ENCODE measurements at regions of chr10 and their contacts with region 1.

Region 1: GRCh38 chr10:13586676-13587355 is at the start of gene PRPF18:
- DNase-seq: peak; percentile 87 to 96 (median 93)
- ATAC-seq: peak; percentile 100
- H3K4me3 ChIP-seq: peak within 1 kb of the TSS; percentile 96
- H3K4me3 Mint-ChIP-seq: peak within 1 kb of the TSS; percentile 95 to 100 (median 100)
- H3K27ac ChIP-seq: peak within 1 kb of the TSS; percentile 74
- H3K27ac Mint-ChIP-seq: peak within 1 kb of the TSS; percentile 91 to 100 (median 98)
- H3K4me1 ChIP-seq: peaks cover 8 to 13% of the 10 kb centered on the region in 2 donors
- H3K4me1 Mint-ChIP-seq: peaks cover 15 to 49% (median 40%) of the 10 kb centered on the region in 7 donors
- H3K27me3 ChIP-seq: no peaks in the 10 kb centered on the region
- H3K27me3 Mint-ChIP-seq: peaks cover 9 to 27% (median 16%) of the 10 kb centered on the region in 5 donors
- total RNA-seq, gene PRPF18: 20.2 to 30.0 (median 27.0) TPM

Region 2: GRCh38 chr10:12195603-12196506 is 1391.0 kb before region 1 on chr10 and contains the starts of genes CDC123 and NUDT5:
- CTCF ChIA-PET with region 1: no interaction called
- POLR2A ChIA-PET with region 1: interaction called, 4 read pairs
- intact Hi-C with region 1: loop called in 1 of 2 experiments (anchors 5 kb)
- DNase-seq: peak; percentile 77 to 89 (median 87)
- ATAC-seq: peak; percentile 96
- H3K4me3 ChIP-seq: peak within 1 kb of the TSS; percentile 84
- H3K4me3 Mint-ChIP-seq: peak within 1 kb of the TSS; percentile 94 to 99 (median 97)
- H3K27ac ChIP-seq: peak within 1 kb of the TSS; percentile 97
- H3K27ac Mint-ChIP-seq: peak within 1 kb of the TSS; percentile 96 to 99 (median 99)
- H3K4me1 ChIP-seq: peaks cover 9 to 12% of the 10 kb centered on the region in 2 donors
- H3K4me1 Mint-ChIP-seq: peaks cover 43 to 72% (median 59%) of the 10 kb centered on the region in 7 donors
- H3K27me3 ChIP-seq: no peaks in the 10 kb centered on the region
- H3K27me3 Mint-ChIP-seq: no peaks in the 10 kb centered on the region
- total RNA-seq, gene CDC123: 27.0 to 97.8 (median 34.2) TPM
- total RNA-seq, gene NUDT5: 24.5 to 89.4 (median 47.4) TPM

Region 3: DNA sequence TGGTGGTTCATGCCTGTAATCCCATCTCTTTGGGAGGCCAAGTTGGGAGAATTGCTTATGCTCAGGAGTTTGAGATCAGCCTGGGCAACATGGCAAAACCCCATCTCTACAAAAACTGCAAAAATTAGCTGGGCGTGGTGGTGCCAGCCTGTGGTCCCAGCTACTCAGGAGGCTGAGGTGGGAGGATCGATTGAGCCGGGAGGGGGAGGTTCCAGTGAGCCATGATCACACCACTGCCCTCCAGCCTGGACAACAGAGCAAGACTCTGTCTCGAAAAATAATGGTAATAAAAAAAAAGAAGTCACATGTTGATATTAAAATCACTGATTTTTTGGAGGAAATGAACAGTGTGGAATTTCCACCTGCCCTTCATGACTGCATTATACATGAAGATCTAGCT is 302.8 kb before region 1 on chr10:
- CTCF ChIA-PET with region 1: no interaction called
- POLR2A ChIA-PET with region 1: no interaction called
- intact Hi-C with region 1: no loop called
- DNase-seq: no peak
- ATAC-seq: no peak
- H3K4me3 ChIP-seq: no peak overlapping the region
- H3K4me3 Mint-ChIP-seq: no peak overlapping the region
- H3K27ac ChIP-seq: no peak overlapping the region
- H3K27ac Mint-ChIP-seq: no peak overlapping the region
- H3K4me1 ChIP-seq: no peaks in the 10 kb centered on the region
- H3K4me1 Mint-ChIP-seq: peaks cover 0 to 6% (median 0%) of the 10 kb centered on the region in 7 donors
- H3K27me3 ChIP-seq: no peaks in the 10 kb centered on the region
- H3K27me3 Mint-ChIP-seq: no peaks in the 10 kb centered on the region

Region 4: DNA sequence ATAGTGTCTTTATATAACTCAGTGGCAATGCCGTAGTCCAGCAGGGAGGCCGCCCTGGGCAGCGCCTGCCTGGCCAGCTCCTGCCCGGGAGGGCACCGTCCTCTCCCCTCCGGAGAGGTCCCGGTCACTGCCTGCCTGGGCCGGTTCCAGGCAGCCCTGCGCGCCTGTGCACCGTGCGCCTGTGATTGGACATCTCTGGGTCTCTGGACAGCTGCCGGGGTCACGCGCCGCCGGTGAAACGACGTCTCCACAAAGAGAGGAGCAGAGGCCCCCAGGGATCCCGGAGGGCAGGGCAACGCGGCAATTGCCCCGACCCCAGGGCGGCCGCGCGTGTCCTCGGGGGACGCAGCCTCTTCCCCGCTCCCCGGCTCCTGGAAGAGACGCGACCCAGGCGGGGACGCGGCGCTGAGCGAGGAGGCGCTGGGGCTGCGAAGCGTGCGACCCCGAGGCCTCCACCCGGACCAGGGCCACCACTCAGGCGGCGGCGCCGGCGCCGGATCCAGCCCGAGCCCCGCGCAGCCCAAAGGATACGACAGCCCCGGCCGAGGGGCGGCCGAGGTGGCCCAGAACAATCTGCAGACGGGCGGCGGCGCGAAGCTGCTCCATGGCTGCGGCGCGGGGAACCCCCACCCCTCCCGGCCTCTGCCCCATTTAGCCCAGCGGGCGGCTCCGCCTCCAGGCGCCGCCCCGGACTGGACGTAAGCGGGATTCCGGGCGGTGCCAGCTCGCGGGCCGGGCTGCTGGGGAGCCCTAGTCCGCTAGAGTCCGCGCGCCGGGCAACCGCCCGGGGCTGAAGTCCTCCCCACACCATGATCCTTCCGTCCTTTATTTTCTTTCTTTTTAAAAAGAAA is 287.2 kb before region 1 on chr10 and contains the start of gene PHYH:
- CTCF ChIA-PET with region 1: no interaction called
- POLR2A ChIA-PET with region 1: interaction called, 5 read pairs
- intact Hi-C with region 1: loop called in 1 of 2 experiments (anchors 1 kb)
- DNase-seq: peak; percentile 70 to 88 (median 78)
- ATAC-seq: peak; percentile 77
- H3K4me3 ChIP-seq: peak within 1 kb of the TSS; percentile 69
- H3K4me3 Mint-ChIP-seq: peak within 1 kb of the TSS; percentile 70 to 96 (median 86)
- H3K27ac ChIP-seq: peak within 1 kb of the TSS; percentile 95
- H3K27ac Mint-ChIP-seq: peak within 1 kb of the TSS; percentile 92 to 99 (median 97)
- H3K4me1 ChIP-seq: peaks cover 16 to 19% of the 10 kb centered on the region in 2 donors
- H3K4me1 Mint-ChIP-seq: peaks cover 13 to 34% (median 22%) of the 10 kb centered on the region in 7 donors
- H3K27me3 ChIP-seq: no peaks in the 10 kb centered on the region
- H3K27me3 Mint-ChIP-seq: no peaks in the 10 kb centered on the region
- total RNA-seq, gene PHYH: 11.2 to 17.7 (median 13.2) TPM

Region 5: DNA sequence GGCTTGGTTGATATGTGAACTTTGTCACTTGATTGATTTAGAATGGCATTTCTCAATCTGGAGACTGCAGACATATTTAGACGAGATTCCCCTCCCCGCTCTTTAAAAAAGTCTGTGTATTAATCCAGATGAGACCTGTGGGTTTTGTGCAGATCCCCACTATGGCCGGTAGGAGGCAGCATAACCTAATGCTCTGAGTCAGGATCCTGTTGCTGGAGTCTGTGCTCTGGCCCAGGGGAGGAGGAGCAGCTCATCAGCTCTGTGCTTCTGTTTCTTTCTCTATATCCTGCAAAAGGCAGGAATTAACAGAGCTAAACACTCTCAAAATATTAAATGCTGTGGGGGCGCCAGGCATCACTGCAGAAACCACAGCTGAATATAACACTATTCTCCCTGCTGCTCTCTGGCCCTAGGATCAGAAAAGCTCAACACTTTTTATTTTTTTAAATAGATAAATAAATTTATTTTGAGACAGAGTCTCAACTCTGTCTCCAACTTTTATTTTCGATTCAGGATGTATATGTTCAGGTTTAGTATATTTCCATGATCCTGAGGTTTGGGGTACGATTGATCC is 214.8 kb before region 1 on chr10:
- CTCF ChIA-PET with region 1: interaction called, 3 read pairs
- POLR2A ChIA-PET with region 1: no interaction called
- intact Hi-C with region 1: loop called (anchors 1 kb)
- DNase-seq: peak; percentile 31 to 81 (median 78)
- ATAC-seq: peak; percentile 99
- H3K4me3 ChIP-seq: no peak overlapping the region
- H3K4me3 Mint-ChIP-seq: no peak overlapping the region
- H3K27ac ChIP-seq: no peak overlapping the region
- H3K27ac Mint-ChIP-seq: no peak overlapping the region
- H3K4me1 ChIP-seq: no peaks in the 10 kb centered on the region
- H3K4me1 Mint-ChIP-seq: peaks cover 0 to 4% (median 0%) of the 10 kb centered on the region in 7 donors
- H3K27me3 ChIP-seq: no peaks in the 10 kb centered on the region
- H3K27me3 Mint-ChIP-seq: peaks cover 0 to 4% (median 0%) of the 10 kb centered on the region in 5 donors

Region 6: DNA sequence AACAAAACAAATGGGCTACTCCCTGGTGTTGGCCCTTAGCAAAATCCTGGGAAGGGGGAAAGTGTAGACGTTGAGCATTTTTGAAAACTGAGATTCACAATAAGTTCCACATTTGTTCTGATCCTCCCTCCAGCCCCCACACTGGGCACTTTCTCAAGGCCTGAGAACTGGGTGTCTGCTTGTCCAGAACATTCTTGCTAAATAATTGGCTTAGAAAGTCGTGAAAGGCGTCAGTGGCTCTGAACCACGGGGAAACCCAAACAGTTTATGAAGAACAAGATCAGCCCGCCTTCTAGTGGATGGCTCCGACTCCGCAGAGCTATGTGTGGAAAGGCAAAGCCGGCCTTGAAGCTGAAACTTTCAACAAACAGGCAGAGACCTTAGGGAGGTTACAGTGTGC is 370.0 kb after region 1 on chr10:
- CTCF ChIA-PET with region 1: no interaction called
- POLR2A ChIA-PET with region 1: no interaction called
- intact Hi-C with region 1: no loop called
- DNase-seq: no peak
- ATAC-seq: no peak
- H3K4me3 ChIP-seq: no peak overlapping the region
- H3K4me3 Mint-ChIP-seq: no peak overlapping the region
- H3K27ac ChIP-seq: no peak overlapping the region
- H3K27ac Mint-ChIP-seq: no peak overlapping the region
- H3K4me1 ChIP-seq: no peaks in the 10 kb centered on the region
- H3K4me1 Mint-ChIP-seq: peaks cover 0 to 24% (median 14%) of the 10 kb centered on the region in 7 donors
- H3K27me3 ChIP-seq: no peaks in the 10 kb centered on the region
- H3K27me3 Mint-ChIP-seq: peaks cover 0 to 5% (median 0%) of the 10 kb centered on the region in 5 donors

Region 7: DNA sequence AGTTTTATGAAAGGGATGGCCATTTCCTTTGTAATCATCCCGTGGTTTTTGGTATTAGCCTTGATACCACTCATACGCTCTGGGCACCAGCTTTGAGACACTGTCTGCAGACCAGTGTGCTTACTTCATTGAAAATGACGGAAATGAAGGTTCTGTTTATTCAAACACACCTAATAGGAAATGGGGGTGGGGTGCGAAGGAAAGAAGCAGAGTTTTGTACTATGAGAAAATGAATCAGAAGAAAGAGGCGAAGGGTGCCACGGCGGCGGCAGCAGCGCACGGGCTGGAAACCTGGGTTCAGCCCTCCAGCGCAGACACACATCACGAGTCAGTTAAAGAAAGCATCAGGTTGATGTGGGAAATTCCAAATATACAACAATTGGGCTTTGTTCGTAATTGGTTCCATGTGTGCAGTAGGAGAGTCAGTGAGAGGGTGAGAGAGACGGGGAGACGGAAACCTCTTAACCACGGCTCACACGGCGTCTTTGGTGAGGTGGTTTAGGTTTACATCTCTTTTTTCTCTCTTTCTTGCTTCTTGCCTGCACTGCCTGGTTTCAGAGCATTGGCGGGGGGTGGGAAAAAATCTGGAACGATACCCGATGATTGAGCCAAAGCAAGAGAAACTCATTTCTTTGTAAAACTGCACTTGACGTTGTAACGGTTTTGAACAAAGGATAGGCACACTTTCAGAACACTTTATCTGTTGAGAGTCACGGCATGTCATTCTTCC is 422.7 kb after region 1 on chr10:
- CTCF ChIA-PET with region 1: no interaction called
- POLR2A ChIA-PET with region 1: no interaction called
- intact Hi-C with region 1: loop called in 1 of 2 experiments (anchors 2 kb)
- DNase-seq: peak; percentile 28 to 86 (median 78)
- ATAC-seq: peak; percentile 93
- H3K4me3 ChIP-seq: peak overlapping the region; percentile 44
- H3K4me3 Mint-ChIP-seq: peak overlapping the region; percentile 76 to 94 (median 86)
- H3K27ac ChIP-seq: peak overlapping the region; percentile 66
- H3K27ac Mint-ChIP-seq: peak overlapping the region; percentile 84 to 95 (median 91)
- H3K4me1 ChIP-seq: peaks cover 22 to 28% of the 10 kb centered on the region in 2 donors
- H3K4me1 Mint-ChIP-seq: peaks cover 24 to 75% (median 54%) of the 10 kb centered on the region in 7 donors
- H3K27me3 ChIP-seq: no peaks in the 10 kb centered on the region
- H3K27me3 Mint-ChIP-seq: peaks cover 0 to 30% (median 0%) of the 10 kb centered on the region in 5 donors

Region 8: DNA sequence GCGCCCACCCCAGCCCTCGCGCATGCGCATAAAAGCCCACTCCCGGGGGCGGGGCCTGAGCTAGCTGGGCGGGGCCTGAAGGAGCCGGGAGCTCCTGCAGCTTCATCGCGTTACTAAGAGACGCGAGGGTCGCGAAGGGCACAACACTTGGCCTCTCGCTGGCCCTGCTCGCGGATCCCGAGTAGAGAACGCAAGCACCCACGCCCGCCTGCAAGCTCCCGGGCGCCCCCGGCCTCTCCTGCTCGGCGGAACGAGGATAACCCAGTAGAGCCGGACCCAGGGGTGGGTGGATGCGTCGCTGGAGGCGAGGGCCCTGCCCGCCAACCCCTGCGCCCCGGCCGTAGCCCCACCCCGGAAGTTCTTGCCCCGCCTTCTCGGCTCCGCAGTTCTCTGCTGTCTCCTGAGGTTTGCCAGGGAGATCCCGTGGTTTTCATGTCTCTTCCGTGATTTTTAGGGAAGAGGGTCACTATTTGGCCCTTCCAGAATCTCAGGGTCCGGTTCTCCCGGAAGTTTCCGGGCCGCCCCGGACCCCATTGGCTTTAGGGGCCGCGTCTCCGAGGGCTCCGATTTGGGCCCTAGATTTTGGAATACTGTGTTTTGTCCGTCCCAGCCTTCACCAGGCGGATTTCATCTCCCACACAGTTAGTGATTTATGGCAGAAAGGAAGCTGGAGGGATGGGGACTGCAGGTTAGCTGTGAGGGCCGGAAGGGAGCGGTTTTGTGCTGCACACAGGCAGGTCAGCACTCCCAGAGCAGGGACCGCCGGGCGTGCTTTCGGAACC is 1372.7 kb after region 1 on chr10 and contains the start of gene MEIG1:
- CTCF ChIA-PET with region 1: no interaction called
- POLR2A ChIA-PET with region 1: no interaction called
- intact Hi-C with region 1: loop called (anchors 1 to 10 kb)
- DNase-seq: peak; percentile 82 to 99 (median 90)
- ATAC-seq: peak; percentile 93
- H3K4me3 ChIP-seq: peak within 1 kb of the TSS; percentile 97
- H3K4me3 Mint-ChIP-seq: peak within 1 kb of the TSS; percentile 91 to 99 (median 96)
- H3K27ac ChIP-seq: peak within 1 kb of the TSS; percentile 81
- H3K27ac Mint-ChIP-seq: peak within 1 kb of the TSS; percentile 93 to 98 (median 96)
- H3K4me1 ChIP-seq: peaks cover 8 to 10% of the 10 kb centered on the region in 2 donors
- H3K4me1 Mint-ChIP-seq: peaks cover 6 to 42% (median 34%) of the 10 kb centered on the region in 7 donors
- H3K27me3 ChIP-seq: no peaks in the 10 kb centered on the region
- H3K27me3 Mint-ChIP-seq: no peaks in the 10 kb centered on the region
- total RNA-seq, gene MEIG1: 1.2 to 1.9 TPM in 2 of 5 experiments, not detected in the others

Measured in naive thymus-derived CD4-positive, alpha-beta T cell (primary cell).